ENCODE measurements at regions of chr2 and their contacts with region 1.

Region 1: DNA sequence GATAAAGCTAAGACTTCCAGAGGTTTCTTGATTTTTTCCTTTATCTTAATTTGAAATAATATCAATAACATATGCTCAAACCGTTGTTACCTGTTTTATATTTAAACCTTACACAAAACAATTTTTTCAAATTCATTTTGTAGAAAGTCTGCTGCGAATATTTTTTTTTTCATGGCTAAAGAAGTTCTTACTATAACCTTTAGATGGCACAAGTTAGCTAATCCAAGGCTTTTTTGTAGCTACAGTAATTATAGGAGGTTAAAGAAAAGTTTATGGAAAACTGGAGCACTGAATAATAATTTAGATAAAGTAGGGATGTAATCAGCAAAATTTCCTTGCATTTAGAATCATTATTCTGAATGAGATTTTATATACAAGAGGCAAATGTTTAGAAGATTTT is 78.0 kb upstream of the PNPT1 start:
- DNase-seq: no peak
- H3K4me3 ChIP-seq: no peak overlapping the region
- CTCF ChIP-seq: peak; percentile 12

Region 2: DNA sequence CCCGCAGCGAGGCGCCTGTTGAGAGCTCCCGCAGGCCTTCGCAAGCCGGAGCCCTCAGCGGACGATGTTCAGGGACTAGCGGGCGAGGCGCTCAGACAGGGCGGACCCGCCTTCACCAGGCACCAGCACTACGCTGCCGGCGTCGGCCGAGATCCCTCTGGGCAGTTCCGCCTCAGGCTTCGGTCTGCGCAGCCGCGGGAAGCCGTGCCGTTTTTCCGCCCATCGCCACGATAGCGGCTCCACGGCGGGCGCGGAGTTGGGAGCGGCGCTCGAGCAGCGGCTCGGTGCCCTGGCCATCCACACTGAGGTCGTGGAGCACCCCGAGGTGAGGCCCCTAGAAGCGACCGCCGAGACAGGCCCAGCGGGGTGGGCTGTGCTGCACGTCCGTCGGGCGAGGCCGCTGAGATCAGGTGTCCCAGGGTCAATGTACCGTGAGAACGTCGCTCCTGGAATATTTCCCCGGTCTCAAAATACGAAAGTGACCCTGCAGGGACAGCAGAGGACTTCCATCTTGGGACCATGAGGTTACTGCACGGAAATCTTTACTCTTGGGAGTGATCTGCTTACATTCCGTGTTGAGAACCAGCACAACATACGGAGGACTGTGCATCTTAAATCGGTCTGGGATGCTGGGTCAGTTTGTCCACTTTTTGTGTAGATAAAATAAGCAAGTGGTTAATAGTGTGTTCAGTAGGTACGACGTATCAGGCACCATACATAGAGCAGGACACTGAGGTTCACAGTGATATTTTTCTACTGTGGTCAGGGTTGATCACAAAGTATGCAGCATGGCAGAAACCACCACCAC is 489.3 kb before region 1 on chr2:
- CTCF ChIA-PET with region 1: no interaction called
- POLR2A ChIA-PET with region 1: no interaction called
- DNase-seq: peak; percentile 29
- H3K4me3 ChIP-seq: peak overlapping the region; percentile 78
- CTCF ChIP-seq: no peak

Region 3: GRCh38 chr2:55581435-55581834 is 190.2 kb before region 1 on chr2:
- CTCF ChIA-PET with region 1: no interaction called
- POLR2A ChIA-PET with region 1: no interaction called
- DNase-seq: no peak
- H3K4me3 ChIP-seq: no peak overlapping the region
- CTCF ChIP-seq: no peak

Region 4: GRCh38 chr2:55992465-55992864 is 220.9 kb after region 1 on chr2:
- CTCF ChIA-PET with region 1: interaction called, 16 read pairs
- POLR2A ChIA-PET with region 1: no interaction called
- DNase-seq: peak; percentile 100
- H3K4me3 ChIP-seq: no peak overlapping the region
- CTCF ChIP-seq: no peak

Region 5: DNA sequence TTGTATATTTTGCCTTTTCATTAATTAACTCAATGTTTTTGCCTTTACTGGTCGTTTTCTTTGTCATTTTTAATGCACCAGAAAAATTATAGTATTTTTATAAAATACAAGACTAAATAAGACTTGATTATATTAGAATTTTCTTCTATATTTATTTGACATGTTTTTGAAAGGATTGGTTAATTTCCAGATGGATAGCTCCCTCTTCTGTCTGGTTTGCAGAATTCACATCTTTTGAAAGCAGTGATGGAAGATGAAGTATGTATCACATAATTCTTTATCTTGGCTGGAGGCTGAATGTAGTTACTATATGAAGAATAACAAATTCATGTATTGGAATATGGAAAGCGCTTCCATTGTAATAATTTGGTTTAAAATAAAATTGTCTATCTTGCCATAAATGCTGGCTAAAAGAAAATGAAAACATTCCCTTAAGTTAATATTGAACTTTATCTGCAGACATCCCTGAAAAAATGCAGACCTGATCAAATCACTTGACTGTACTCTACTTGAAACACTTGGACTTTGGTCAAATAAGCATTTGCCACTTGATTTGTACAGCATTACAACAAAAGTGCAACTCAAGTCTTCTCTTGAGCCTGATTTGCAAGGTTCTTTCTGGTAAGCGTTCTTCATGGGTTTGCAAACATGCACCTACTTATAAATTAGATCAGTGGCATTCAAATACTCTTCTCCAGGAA is 238.3 kb after region 1 on chr2:
- CTCF ChIA-PET with region 1: interaction called, 124 read pairs
- POLR2A ChIA-PET with region 1: no interaction called
- DNase-seq: peak; percentile 31
- H3K4me3 ChIP-seq: no peak overlapping the region
- CTCF ChIP-seq: peak; percentile 50